ENCODE measurements at regions of chr1 and their contacts with region 1.

Region 1: DNA sequence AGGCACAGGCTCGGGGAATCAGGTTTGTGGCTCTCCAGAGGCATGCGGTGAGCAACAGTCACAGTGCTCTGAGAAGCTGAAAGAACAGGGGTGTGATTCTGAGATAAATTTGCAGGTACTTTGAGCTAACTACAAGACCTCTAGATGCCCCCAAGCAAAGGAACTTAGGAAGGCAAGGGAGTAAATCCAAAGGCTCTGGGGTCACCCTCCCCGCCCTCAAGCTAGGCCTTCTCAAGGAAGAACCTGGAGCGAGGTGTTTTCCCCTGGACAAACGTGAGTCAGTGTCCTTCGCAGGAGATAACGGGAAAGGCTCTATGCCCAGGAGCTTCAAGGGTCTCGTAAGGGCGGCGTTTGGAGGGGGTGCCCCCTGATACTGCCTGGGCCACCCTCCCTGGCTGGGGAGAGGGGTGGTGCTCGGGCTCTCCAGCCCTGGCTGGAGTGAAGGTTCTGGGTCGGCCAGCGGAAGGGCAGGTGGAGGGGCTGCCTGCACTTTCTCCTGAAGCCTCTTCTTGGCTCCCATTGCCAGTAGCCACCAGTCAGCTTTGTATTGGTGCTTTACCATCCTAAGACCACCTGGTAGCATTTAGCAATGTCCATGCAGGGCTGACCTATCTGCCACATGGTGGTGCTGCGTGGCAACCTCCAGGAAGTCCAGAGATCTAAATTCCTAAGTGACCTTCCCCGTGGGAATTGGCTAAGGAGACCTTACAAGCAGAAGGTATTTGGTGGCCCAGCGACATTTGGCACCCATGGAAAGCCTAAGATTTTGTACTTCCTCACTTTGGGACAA is 44.0 kb downstream of the GPR161 start:
- DNase-seq: no peak
- H3K4me3 ChIP-seq: no peak overlapping the region
- H3K27ac ChIP-seq: peak overlapping the region in 1 of 2 donors; percentile 28
- H3K4me1 ChIP-seq: peaks cover 11% of the 10 kb centered on the region
- H3K27me3 ChIP-seq: no peaks in the 10 kb centered on the region
- CTCF ChIP-seq: peak in 1 of 3 donors; percentile 10
- EP300 ChIP-seq: no peak
- POLR2A ChIP-seq: no peak

Region 2: DNA sequence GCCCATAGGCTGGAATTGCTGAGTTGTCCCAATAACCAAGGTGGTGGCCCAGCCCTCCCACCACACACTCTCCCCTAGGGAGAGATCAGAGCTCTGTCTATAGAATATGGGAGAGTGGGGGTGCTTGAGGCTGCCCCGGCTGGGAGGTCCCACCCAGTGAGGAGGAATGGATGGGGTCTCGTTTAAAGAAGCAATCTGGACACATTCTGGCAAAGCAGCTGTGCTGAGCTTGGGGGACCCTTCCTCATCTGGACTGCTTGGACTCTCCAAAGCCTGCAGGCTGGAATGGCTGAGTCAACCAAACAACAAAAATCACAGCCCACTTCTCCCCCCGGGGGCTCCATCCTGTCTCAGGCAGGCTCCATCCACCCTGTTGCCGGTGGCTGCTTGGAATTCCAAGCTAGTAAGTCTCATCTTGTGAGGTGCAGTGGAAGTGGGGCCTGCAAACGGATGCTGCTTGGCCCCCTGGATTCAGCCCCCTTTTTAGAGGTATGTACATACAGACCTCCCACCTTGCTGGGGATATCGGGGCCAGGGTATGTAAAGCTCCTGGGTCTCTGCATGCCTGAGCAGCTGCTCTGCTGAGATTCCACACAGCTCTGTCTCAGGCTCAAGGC is 1858.9 kb before region 1 on chr1:
- intact Hi-C with region 1: no loop called
- DNase-seq: no peak
- H3K4me3 ChIP-seq: no peak overlapping the region
- H3K27ac ChIP-seq: no peak overlapping the region
- H3K4me1 ChIP-seq: no peaks in the 10 kb centered on the region
- H3K27me3 ChIP-seq: no peaks in the 10 kb centered on the region
- CTCF ChIP-seq: no peak
- EP300 ChIP-seq: no peak
- POLR2A ChIP-seq: no peak

Region 3: GRCh38 chr1:168136709-168137514 is 44.2 kb after region 1 on chr1 and contains the start of gene GPR161:
- intact Hi-C with region 1: loop called in 3 of 4 experiments (anchors 5 to 10 kb)
- DNase-seq: peak; percentile 70 to 82 (median 74)
- H3K4me3 ChIP-seq: peak within 1 kb of the TSS; percentile 92
- H3K27ac ChIP-seq: peak within 1 kb of the TSS; percentile 87
- H3K4me1 ChIP-seq: peaks cover 6% of the 10 kb centered on the region
- H3K27me3 ChIP-seq: no peaks in the 10 kb centered on the region
- CTCF ChIP-seq: no peak
- EP300 ChIP-seq: no peak
- POLR2A ChIP-seq: no peak
- total RNA-seq, gene GPR161: 7.4 to 23.4 (median 19.1) TPM

Region 4: GRCh38 chr1:168141871-168142385 is 49.2 kb after region 1 on chr1:
- intact Hi-C with region 1: loop called in 3 of 4 experiments (anchors 5 to 10 kb)
- DNase-seq: no peak
- H3K4me3 ChIP-seq: no peak overlapping the region
- H3K27ac ChIP-seq: no peak overlapping the region
- H3K4me1 ChIP-seq: no peaks in the 10 kb centered on the region
- H3K27me3 ChIP-seq: no peaks in the 10 kb centered on the region
- CTCF ChIP-seq: no peak
- EP300 ChIP-seq: no peak
- POLR2A ChIP-seq: no peak

Measured in ovary (tissue), 10 donors.